ENCODE measurements at regions of chr12 and their contacts with region 1.

Region 1: GRCh38 chr12:31989571-31990362 is 30.6 kb downstream of the RESF1 start:
- DNase-seq: peak; percentile 27
- ATAC-seq: peak; percentile 44
- H3K4me3 Mint-ChIP-seq: no peak overlapping the region
- H3K27ac Mint-ChIP-seq: peak overlapping the region; percentile 89
- H3K4me1 Mint-ChIP-seq: peaks cover 58% of the 10 kb centered on the region
- H3K27me3 Mint-ChIP-seq: no peaks in the 10 kb centered on the region

Region 2: DNA sequence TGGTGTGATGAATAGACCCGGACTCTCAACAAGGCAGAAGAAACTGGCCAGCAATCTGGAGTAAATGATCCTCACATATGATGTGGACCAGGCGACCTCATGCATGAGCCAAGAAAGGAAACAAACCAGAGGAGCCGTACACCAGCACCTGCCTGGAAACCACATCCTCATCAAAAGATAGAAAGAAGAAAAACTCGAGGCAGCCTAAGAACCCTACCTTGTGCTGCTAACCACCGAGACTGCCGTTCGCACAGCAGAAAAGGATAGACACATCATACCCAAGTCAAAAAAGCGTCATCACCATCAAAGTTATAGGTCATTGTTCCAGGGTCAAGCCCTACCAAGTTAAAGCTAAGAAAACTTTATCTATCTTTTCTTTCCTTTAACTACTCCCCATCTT is 36.1 kb after region 1 on chr12:
- CTCF ChIA-PET with region 1: no interaction called
- POLR2A ChIA-PET with region 1: no interaction called
- intact Hi-C with region 1: loop called in 1 of 2 experiments (anchors 5 kb)
- DNase-seq: peak; percentile 78
- ATAC-seq: peak; percentile 99
- H3K4me3 Mint-ChIP-seq: peak overlapping the region; percentile 40
- H3K27ac Mint-ChIP-seq: peak overlapping the region; percentile 78
- H3K4me1 Mint-ChIP-seq: peaks cover 29% of the 10 kb centered on the region
- H3K27me3 Mint-ChIP-seq: no peaks in the 10 kb centered on the region